IMR-90 (cell line): ENCODE measurements at regions of chr12 and their contacts with region 1.

Region 1: DNA sequence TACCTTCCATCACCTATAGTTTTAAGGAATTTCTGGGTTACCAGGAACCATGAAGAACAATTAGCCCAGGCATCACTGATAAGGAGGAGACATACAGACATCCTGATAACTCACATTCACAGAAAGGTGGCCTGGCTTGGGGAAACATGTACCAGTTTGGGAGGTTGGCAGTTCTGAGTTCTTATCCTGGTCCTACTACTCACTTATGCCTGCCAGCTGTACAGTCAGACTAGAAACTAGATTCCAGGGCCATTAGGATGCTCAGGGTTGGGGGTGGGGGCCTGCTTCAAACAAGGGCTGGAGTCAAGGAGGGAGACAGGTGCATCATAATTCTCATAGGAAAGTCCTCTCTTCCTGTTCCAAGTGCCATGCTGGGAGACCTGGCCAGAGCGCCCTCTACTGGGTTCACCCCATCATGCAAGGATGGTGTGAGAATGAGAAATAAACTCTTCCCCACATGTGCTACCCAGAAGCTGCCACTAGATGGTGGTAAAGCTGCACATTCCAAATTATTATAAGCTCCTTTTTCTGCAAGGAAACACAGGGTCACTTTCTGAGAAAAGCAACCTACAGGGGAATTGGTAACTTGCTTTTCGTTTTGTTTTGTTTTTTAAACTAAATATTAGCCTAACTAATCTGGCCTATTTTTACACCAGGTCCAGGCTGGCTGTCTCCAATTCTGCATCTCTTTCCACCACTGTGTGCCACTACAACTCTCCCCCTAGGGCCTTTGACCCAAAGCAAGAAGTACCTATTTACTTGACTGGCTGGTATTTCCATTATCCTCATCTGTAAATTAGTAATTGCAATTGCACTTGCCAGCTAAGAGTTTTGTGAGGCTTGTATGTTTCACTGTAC is 14.5 kb downstream of the OAS2 start:
- DNase-seq: peak; percentile 53
- ATAC-seq: peak; percentile 93
- H3K4me3 ChIP-seq: no peak overlapping the region
- H3K27ac ChIP-seq: no peak overlapping the region
- H3K4me1 ChIP-seq: no peaks in the 10 kb centered on the region
- H3K27me3 ChIP-seq: no peaks in the 10 kb centered on the region; the same call in 1 of the 2 replicates
- CTCF ChIP-seq: peak; percentile 93
- POLR2A ChIP-seq: no peak
- RAD21 ChIP-seq: peak; percentile 72

Region 2: DNA sequence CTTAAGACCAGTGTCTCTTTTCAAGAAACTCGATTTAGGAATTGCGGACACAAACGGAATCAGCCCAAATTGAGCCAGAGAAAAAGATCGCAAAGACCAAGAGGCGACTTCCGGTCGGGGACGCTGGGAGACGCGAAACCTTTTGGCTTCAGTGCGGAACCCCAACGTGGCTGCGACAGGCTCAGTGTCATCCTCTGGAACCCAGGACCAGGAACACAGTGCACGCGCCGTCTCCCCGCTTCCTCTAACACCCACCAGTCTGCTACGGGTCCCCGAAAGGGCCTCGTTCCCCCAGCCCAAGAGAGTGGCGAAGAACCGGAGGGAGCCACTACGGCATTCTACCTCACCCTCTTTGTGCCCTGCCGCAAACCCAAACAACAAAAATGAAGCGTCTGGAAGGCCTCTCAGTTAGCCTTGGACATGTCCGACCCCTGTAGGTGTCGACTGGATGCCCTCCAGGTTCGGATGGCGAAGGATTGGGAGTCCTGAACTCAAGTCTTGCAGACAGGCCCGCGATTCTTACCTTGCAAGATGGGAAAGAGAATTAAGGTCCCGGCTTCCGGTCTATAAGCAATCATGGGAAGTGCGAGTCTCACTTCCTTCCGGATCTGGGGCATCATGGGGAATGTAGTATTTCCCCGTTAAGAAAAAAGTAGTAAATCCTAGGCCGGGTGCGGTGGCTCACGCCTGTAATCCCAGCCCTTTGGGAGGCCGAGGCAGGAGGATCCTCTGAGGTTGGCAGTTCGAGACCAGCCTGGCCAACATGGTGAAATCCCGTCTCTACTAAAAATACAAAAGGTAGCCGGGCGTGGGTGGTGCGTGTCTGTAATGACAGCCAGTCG is 583.5 kb before region 1 on chr12 and contains the start of gene RPL6:
- CTCF ChIA-PET with region 1: no interaction called
- POLR2A ChIA-PET with region 1: no interaction called
- dilution Hi-C with region 1: no loop called
- in situ Hi-C with region 1: no loop called
- intact Hi-C with region 1: no loop called
- DNase-seq: peak; percentile 94
- ATAC-seq: peak; percentile 85
- H3K4me3 ChIP-seq: peak within 1 kb of the TSS; percentile 87
- H3K27ac ChIP-seq: peak within 1 kb of the TSS; percentile 97
- H3K4me1 ChIP-seq: no peaks in the 10 kb centered on the region; the same call in 1 of the 2 replicates
- H3K27me3 ChIP-seq: no peaks in the 10 kb centered on the region
- CTCF ChIP-seq: no peak
- POLR2A ChIP-seq: peak; percentile 97
- RAD21 ChIP-seq: no peak
- total RNA-seq, gene RPL6: 1,317 and 1,900 TPM in 2 replicates

Region 3: GRCh38 chr12:112928978-112929377 is 63.8 kb before region 1 on chr12:
- CTCF ChIA-PET with region 1: no interaction called
- POLR2A ChIA-PET with region 1: no interaction called
- dilution Hi-C with region 1: no loop called
- in situ Hi-C with region 1: no loop called
- intact Hi-C with region 1: no loop called
- DNase-seq: no peak
- ATAC-seq: no peak
- H3K4me3 ChIP-seq: no peak overlapping the region
- H3K27ac ChIP-seq: no peak overlapping the region
- H3K4me1 ChIP-seq: no peaks in the 10 kb centered on the region
- H3K27me3 ChIP-seq: no peaks in the 10 kb centered on the region
- CTCF ChIP-seq: no peak
- POLR2A ChIP-seq: no peak
- RAD21 ChIP-seq: no peak

Region 4: DNA sequence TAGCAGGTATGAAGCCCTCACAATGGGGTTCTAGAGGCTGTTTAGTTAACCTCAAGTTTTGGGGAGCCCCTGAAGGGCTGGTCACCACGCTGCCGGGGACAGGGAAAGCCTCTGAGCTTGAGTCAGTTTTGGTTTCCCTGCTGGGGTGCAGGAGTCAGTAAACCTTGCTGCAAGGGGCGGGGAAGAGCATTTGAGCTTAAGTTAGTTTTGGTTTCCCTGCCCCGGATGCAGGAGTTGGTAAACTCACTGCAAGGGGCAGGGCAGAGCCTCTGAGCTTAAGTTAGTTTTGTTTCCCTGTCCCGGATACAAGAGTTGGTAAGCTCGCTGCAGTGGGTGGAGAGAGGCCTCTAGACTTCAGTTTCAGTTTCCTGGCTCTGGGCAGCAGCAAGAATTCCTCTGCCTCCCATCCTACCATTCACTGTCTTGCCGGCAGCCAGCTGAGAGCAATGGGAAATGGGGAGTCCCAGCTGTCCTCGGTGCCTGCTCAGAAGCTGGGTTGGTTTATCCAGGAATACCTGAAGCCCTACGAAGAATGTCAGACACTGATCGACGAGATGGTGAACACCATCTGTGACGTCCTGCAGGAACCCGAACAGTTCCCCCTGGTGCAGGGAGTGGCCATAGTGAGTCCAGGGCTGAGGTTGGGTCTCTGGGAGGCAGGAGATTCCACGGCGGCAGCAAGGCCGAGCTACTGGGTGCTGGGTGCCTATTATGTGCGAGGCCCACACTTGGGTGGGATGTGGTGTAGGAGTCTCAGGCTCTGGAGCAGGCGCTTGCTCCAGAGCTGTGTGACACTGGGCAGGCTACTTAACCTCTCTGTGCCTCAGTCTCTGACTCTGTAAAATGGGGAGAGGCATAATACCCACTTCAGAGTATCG is 14.4 kb before region 1 on chr12 and contains the start of gene OAS2:
- CTCF ChIA-PET with region 1: interaction called, 13 read pairs
- POLR2A ChIA-PET with region 1: no interaction called
- dilution Hi-C with region 1: no loop called
- in situ Hi-C with region 1: no loop called
- intact Hi-C with region 1: no loop called
- DNase-seq: peak; percentile 48
- ATAC-seq: peak; percentile 90
- H3K4me3 ChIP-seq: 0 out of 2 replicates have a peak within 1 kb of the TSS, but pooled peaks have one; percentile 5
- H3K27ac ChIP-seq: no peak within 1 kb of the TSS
- H3K4me1 ChIP-seq: no peaks in the 10 kb centered on the region; the same call in 1 of the 2 replicates
- H3K27me3 ChIP-seq: no peaks in the 10 kb centered on the region
- CTCF ChIP-seq: no peak
- POLR2A ChIP-seq: no peak
- RAD21 ChIP-seq: no peak
- total RNA-seq, gene OAS2: under 0.01 TPM in 1 of 2 replicates, not detected in the other

Region 5: GRCh38 chr12:113030875-113031525 is 38.2 kb after region 1 on chr12:
- CTCF ChIA-PET with region 1: interaction called, 9 read pairs
- POLR2A ChIA-PET with region 1: no interaction called
- dilution Hi-C with region 1: no loop called
- in situ Hi-C with region 1: no loop called
- intact Hi-C with region 1: loop called (anchors 1 kb)
- DNase-seq: peak; percentile 52
- ATAC-seq: peak; percentile 90
- H3K4me3 ChIP-seq: no peak overlapping the region
- H3K27ac ChIP-seq: no peak overlapping the region
- H3K4me1 ChIP-seq: no peaks in the 10 kb centered on the region
- H3K27me3 ChIP-seq: no peaks in the 10 kb centered on the region
- CTCF ChIP-seq: peak; percentile 67
- POLR2A ChIP-seq: no peak
- RAD21 ChIP-seq: peak; percentile 36

Region 6: GRCh38 chr12:113152835-113153814 is 160.4 kb after region 1 on chr12:
- CTCF ChIA-PET with region 1: interaction called, 7 read pairs
- POLR2A ChIA-PET with region 1: no interaction called
- dilution Hi-C with region 1: no loop called
- in situ Hi-C with region 1: no loop called
- intact Hi-C with region 1: loop called (anchors 5 kb)
- DNase-seq: peak; percentile 65
- ATAC-seq: peak; percentile 82
- H3K4me3 ChIP-seq: no peak overlapping the region
- H3K27ac ChIP-seq: no peak overlapping the region
- H3K4me1 ChIP-seq: peaks cover 2% of the 10 kb centered on the region; the same call in 1 of the 2 replicates
- H3K27me3 ChIP-seq: peaks cover 46% of the 10 kb centered on the region
- CTCF ChIP-seq: peak; percentile 48
- POLR2A ChIP-seq: no peak
- RAD21 ChIP-seq: peak; percentile 47

Region 7: DNA sequence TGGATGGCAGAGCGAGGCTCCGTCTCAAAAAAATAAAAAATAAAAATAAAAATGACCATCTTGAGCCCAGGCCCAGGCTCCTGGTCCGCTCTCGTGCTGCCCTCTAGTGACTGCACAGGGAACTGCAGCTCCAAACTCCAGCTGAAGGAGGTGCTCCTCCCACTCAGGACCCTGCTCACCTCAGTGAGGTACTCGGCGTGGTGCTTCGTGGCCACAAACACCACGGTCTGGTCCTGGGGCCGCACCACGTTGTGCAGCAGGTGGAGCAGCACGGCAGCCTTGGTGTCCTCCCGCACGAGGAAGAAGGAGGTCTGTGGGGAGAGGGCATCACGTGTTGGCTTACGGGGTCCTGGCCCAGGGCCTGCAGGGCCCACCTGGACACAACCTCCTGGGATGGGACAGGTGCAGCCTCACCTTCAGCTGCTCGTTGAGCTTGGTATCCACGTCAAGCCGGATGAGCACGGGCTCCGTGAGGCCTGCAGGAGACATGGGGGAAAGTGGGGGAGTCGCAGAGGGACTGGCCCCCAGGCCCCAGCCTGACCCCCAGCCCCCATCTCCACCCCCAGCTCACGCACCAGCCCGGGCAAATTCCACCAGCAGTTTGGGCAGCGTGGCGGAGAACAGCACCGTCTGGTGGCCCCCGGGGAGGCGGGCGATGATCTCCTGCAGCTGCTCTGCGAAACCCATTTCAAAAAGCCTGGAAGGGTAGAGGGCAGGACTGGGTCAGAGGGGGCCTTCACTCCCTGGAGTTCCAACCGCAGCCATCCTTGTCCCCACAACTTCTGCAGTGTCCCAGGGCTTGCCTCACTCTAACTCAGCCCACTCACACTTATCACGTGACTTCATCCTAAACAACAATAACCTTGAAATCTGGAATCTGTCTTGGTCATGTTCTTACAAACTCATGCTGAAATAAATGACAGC is 182.0 kb after region 1 on chr12:
- CTCF ChIA-PET with region 1: no interaction called
- POLR2A ChIA-PET with region 1: no interaction called
- dilution Hi-C with region 1: no loop called
- in situ Hi-C with region 1: no loop called
- intact Hi-C with region 1: loop called (anchors 1 kb)
- DNase-seq: peak; percentile 52
- ATAC-seq: peak; percentile 98
- H3K4me3 ChIP-seq: no peak overlapping the region
- H3K27ac ChIP-seq: no peak overlapping the region
- H3K4me1 ChIP-seq: peaks cover 2% of the 10 kb centered on the region; the same call in 1 of the 2 replicates
- H3K27me3 ChIP-seq: no peaks in the 10 kb centered on the region
- CTCF ChIP-seq: peak; percentile 93
- POLR2A ChIP-seq: no peak
- RAD21 ChIP-seq: peak; percentile 87

Region 8: GRCh38 chr12:113285679-113286610 is 293.2 kb after region 1 on chr12:
- CTCF ChIA-PET with region 1: no interaction called
- POLR2A ChIA-PET with region 1: no interaction called
- dilution Hi-C with region 1: no loop called
- in situ Hi-C with region 1: no loop called
- intact Hi-C with region 1: no loop called
- DNase-seq: no peak
- ATAC-seq: no peak
- H3K4me3 ChIP-seq: no peak overlapping the region
- H3K27ac ChIP-seq: no peak overlapping the region
- H3K4me1 ChIP-seq: no peaks in the 10 kb centered on the region
- H3K27me3 ChIP-seq: no peaks in the 10 kb centered on the region
- CTCF ChIP-seq: no peak
- POLR2A ChIP-seq: no peak
- RAD21 ChIP-seq: no peak

Region 9: GRCh38 chr12:113720629-113721028 is 727.9 kb after region 1 on chr12:
- CTCF ChIA-PET with region 1: no interaction called
- POLR2A ChIA-PET with region 1: no interaction called
- dilution Hi-C with region 1: no loop called
- in situ Hi-C with region 1: no loop called
- intact Hi-C with region 1: no loop called
- DNase-seq: no peak
- ATAC-seq: no peak
- H3K4me3 ChIP-seq: no peak overlapping the region
- H3K27ac ChIP-seq: no peak overlapping the region
- H3K4me1 ChIP-seq: no peaks in the 10 kb centered on the region
- H3K27me3 ChIP-seq: no peaks in the 10 kb centered on the region; the same call in 1 of the 2 replicates
- CTCF ChIP-seq: no peak
- POLR2A ChIP-seq: no peak
- RAD21 ChIP-seq: no peak